ENCODE measurements at regions of chr12 and their contacts with region 1.

Region 1: GRCh38 chr12:116135209-116135930 is 142.1 kb downstream of the MED13L start:
- DNase-seq: no peak
- H3K4me3 Mint-ChIP-seq: peak overlapping the region; percentile 37
- H3K27ac Mint-ChIP-seq: peak overlapping the region; percentile 97
- H3K4me1 Mint-ChIP-seq: peaks cover 79% of the 10 kb centered on the region
- H3K27me3 Mint-ChIP-seq: no peaks in the 10 kb centered on the region

Region 2: DNA sequence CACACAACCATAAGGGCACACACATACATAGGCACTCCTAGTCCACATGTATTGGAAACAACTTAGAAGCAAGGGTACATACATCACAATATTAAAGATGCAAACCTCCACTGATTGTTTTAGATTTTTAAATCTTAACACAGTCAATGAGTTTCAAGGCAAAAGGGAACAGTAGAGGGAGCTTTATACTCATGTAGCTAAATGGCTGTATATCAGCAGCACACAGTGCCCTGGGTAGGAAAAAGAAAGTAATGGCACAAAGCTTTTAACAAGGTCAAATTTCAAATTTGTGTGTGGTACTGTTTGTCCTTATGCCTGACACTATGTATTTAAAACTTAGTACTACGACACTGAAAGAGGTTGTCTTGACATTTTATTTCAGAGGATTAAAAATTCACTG is 119.8 kb before region 1 on chr12:
- intact Hi-C with region 1: loop called (anchors 5 kb)
- DNase-seq: no peak
- H3K4me3 Mint-ChIP-seq: no peak overlapping the region
- H3K27ac Mint-ChIP-seq: no peak overlapping the region
- H3K4me1 Mint-ChIP-seq: peaks cover 7% of the 10 kb centered on the region
- H3K27me3 Mint-ChIP-seq: no peaks in the 10 kb centered on the region

Region 3: GRCh38 chr12:116087962-116088361 is 47.4 kb before region 1 on chr12:
- intact Hi-C with region 1: loop called (anchors 2 kb)
- DNase-seq: no peak
- H3K4me3 Mint-ChIP-seq: no peak overlapping the region
- H3K27ac Mint-ChIP-seq: peak overlapping the region; percentile 19
- H3K4me1 Mint-ChIP-seq: peaks cover 48% of the 10 kb centered on the region
- H3K27me3 Mint-ChIP-seq: no peaks in the 10 kb centered on the region

Region 4: DNA sequence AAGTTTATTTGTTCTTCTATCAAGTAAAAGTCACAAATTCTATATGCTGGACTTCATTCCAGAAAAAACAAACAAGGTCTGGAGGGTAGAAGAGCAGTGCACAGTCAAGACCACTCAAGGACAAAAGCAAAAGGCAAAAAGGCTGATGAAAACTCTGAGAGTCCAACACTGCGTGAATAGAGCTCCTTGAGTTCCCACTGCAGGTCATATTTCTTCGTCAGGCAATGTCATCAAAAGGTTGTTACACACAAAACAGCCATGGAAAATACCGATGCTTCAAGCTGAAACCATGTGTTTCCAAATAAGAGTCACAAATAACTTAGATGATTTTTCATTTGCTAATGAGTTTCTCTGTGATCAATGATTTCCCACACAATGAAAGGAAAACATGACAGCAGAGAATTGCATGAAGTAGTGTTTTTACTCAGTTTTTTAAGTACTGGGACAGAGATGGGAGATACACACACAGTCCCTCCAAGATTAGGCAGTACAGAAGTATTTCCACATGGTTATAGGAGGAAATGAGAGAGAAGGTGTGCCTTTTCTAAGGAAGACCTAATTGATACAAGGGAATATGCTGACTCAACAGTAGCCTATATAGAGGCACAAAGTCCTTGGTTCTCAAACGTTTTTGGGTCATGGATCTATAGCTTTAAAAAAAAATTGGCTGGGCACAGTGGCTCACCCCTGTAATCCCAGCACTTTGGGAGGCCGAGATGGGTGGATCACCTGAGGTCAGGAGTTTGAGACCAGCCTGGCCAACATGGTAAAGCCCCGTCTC is 35.5 kb before region 1 on chr12:
- intact Hi-C with region 1: loop called (anchors 2 kb)
- DNase-seq: no peak
- H3K4me3 Mint-ChIP-seq: no peak overlapping the region
- H3K27ac Mint-ChIP-seq: peak overlapping the region; percentile 64
- H3K4me1 Mint-ChIP-seq: peaks cover 24% of the 10 kb centered on the region
- H3K27me3 Mint-ChIP-seq: no peaks in the 10 kb centered on the region

Region 5: GRCh38 chr12:116123451-116124258 is 11.7 kb before region 1 on chr12:
- intact Hi-C with region 1: loop called (anchors 1 kb)
- DNase-seq: peak; percentile 12
- H3K4me3 Mint-ChIP-seq: peak overlapping the region; percentile 25
- H3K27ac Mint-ChIP-seq: peak overlapping the region; percentile 6
- H3K4me1 Mint-ChIP-seq: peaks cover 53% of the 10 kb centered on the region
- H3K27me3 Mint-ChIP-seq: no peaks in the 10 kb centered on the region